ENCODE measurements at regions of chr4 and their contacts with region 1.

Region 1: GRCh38 chr4:70734168-70734954 is 12.6 kb downstream of the RUFY3 start:
- DNase-seq: peak; percentile 60
- H3K4me3 Mint-ChIP-seq: peak overlapping the region; percentile 79
- H3K27ac Mint-ChIP-seq: peak overlapping the region; percentile 89
- H3K4me1 Mint-ChIP-seq: peaks cover 14% of the 10 kb centered on the region
- H3K27me3 Mint-ChIP-seq: no peaks in the 10 kb centered on the region
- CTCF ChIP-seq: no peak

Region 2: DNA sequence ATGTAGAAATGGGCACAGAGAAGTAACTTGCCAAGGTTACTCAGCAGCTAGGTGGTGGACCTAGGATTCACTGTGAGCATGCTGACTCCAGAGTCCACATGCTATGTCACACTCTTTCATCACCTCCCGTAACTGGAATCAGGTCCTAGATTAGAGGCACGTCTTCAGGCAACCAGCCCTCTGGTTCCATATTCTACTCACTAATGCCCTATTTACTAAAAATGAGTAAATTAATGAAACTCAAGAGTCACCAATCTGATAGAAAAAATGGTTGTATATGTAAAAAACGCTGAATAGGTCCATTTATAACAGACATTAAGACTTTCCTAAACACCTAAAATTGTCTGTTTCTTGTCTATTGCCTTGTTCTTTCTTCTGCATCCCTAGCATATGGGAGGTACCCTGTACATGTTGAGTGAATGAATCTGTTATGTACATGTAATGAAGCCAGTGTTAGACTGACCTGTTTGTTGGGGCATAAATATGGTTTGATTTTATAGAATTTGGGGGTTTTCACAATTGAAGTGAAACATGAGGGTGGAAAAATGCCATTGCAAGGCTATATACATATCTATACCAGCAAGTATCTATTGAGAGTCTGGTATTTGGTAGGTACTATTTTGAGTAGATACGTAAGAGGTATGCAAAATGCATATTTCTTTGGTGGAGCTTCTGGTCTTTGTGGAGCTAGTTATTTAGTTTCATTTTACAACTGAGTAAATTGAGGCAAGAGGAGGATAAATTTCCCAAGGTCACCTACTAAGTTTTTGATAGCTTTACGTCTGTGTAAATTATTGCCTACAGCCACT is 20.1 kb before region 1 on chr4:
- CTCF ChIA-PET with region 1: interaction called, 4 read pairs
- POLR2A ChIA-PET with region 1: interaction called, 14 read pairs
- intact Hi-C with region 1: no loop called
- DNase-seq: peak; percentile 51
- H3K4me3 Mint-ChIP-seq: peak overlapping the region; percentile 31
- H3K27ac Mint-ChIP-seq: no peak overlapping the region
- H3K4me1 Mint-ChIP-seq: peaks cover 35% of the 10 kb centered on the region
- H3K27me3 Mint-ChIP-seq: no peaks in the 10 kb centered on the region
- CTCF ChIP-seq: no peak

Region 3: GRCh38 chr4:70721747-70722146 is 12.6 kb before region 1 on chr4 and contains the start of gene RUFY3:
- CTCF ChIA-PET with region 1: interaction called, 9 read pairs
- POLR2A ChIA-PET with region 1: interaction called, 25 read pairs
- intact Hi-C with region 1: no loop called
- DNase-seq: no peak
- H3K4me3 Mint-ChIP-seq: no peak within 1 kb of the TSS
- H3K27ac Mint-ChIP-seq: no peak within 1 kb of the TSS
- H3K4me1 Mint-ChIP-seq: no peaks in the 10 kb centered on the region
- H3K27me3 Mint-ChIP-seq: no peaks in the 10 kb centered on the region
- CTCF ChIP-seq: no peak
- total RNA-seq, gene RUFY3: 42.7 and 48.7 TPM in 2 replicates

Region 4: GRCh38 chr4:70746179-70746839 is 11.9 kb after region 1 on chr4:
- CTCF ChIA-PET with region 1: interaction called, 11 read pairs
- POLR2A ChIA-PET with region 1: interaction called, 32 read pairs
- intact Hi-C with region 1: no loop called
- DNase-seq: peak; percentile 51
- H3K4me3 Mint-ChIP-seq: no peak overlapping the region
- H3K27ac Mint-ChIP-seq: no peak overlapping the region
- H3K4me1 Mint-ChIP-seq: peaks cover 25% of the 10 kb centered on the region
- H3K27me3 Mint-ChIP-seq: no peaks in the 10 kb centered on the region
- CTCF ChIP-seq: no peak

Region 5: GRCh38 chr4:70759627-70760026 is 25.3 kb after region 1 on chr4:
- CTCF ChIA-PET with region 1: interaction called, 7 read pairs
- POLR2A ChIA-PET with region 1: interaction called, 15 read pairs
- intact Hi-C with region 1: no loop called
- DNase-seq: no peak
- H3K4me3 Mint-ChIP-seq: no peak overlapping the region
- H3K27ac Mint-ChIP-seq: no peak overlapping the region
- H3K4me1 Mint-ChIP-seq: no peaks in the 10 kb centered on the region
- H3K27me3 Mint-ChIP-seq: no peaks in the 10 kb centered on the region
- CTCF ChIP-seq: no peak

Region 6: GRCh38 chr4:70793626-70794025 is 59.3 kb after region 1 on chr4:
- CTCF ChIA-PET with region 1: no interaction called
- POLR2A ChIA-PET with region 1: no interaction called
- intact Hi-C with region 1: no loop called
- DNase-seq: no peak
- H3K4me3 Mint-ChIP-seq: no peak overlapping the region
- H3K27ac Mint-ChIP-seq: no peak overlapping the region
- H3K4me1 Mint-ChIP-seq: no peaks in the 10 kb centered on the region
- H3K27me3 Mint-ChIP-seq: no peaks in the 10 kb centered on the region
- CTCF ChIP-seq: no peak